ENCODE measurements at regions of chr15 and their contacts with region 1.

Region 1: DNA sequence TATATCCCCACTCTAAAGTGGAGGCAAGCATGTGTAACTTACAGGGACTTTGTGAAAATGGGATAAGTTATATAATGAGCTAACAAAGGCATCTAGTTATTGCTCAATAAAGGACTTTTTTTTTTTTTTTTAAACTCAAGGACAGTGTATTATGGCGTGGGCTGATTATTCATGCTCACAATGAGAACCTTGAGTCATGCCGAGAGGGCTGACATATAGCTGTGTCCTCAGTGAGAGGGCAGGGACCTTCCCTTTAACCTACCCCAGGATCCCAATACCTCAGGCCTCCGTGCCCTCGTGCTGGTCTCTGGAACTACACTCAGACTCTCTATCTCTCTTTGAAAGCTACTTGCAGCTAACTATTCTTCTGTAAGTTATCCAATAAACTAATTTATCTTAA is 319.9 kb upstream of the ICE2 start:
- DNase-seq: no peak
- H3K4me3 Mint-ChIP-seq: no peak overlapping the region
- H3K27ac Mint-ChIP-seq: no peak overlapping the region
- H3K4me1 Mint-ChIP-seq: peaks cover 34% of the 10 kb centered on the region
- H3K27me3 Mint-ChIP-seq: no peaks in the 10 kb centered on the region

Region 2: GRCh38 chr15:60787837-60788691 is 10.8 kb before region 1 on chr15:
- CTCF ChIA-PET with region 1: interaction called, 11 read pairs
- POLR2A ChIA-PET with region 1: no interaction called
- DNase-seq: peak; percentile 24
- H3K4me3 Mint-ChIP-seq: no peak overlapping the region
- H3K27ac Mint-ChIP-seq: peak overlapping the region; percentile 4
- H3K4me1 Mint-ChIP-seq: peaks cover 7% of the 10 kb centered on the region
- H3K27me3 Mint-ChIP-seq: peaks cover 1% of the 10 kb centered on the region

Region 3: DNA sequence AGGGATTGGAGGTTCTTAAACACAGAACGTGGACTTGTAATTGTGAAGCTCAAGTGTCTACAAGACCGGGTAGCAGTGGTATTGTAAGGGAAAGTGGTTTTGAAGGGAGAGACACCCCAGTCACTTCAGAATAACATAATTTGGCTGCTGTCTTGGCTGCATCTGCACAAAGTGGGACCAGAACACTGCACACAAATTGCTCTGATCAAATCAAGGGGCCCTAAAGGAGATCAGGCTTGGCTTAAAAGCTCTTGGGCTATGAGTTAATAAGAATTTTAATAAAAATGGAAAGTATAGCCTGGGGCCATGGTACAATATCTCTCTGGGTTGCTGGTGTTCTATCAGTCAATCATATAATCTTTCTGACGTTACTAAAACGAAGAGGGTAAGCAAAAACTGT is 36.2 kb after region 1 on chr15:
- CTCF ChIA-PET with region 1: no interaction called
- POLR2A ChIA-PET with region 1: interaction called, 10 read pairs
- DNase-seq: no peak
- H3K4me3 Mint-ChIP-seq: no peak overlapping the region
- H3K27ac Mint-ChIP-seq: no peak overlapping the region
- H3K4me1 Mint-ChIP-seq: peaks cover 13% of the 10 kb centered on the region
- H3K27me3 Mint-ChIP-seq: peaks cover 31% of the 10 kb centered on the region